ENCODE measurements at regions of chr11 and their contacts with region 1.

Region 1: DNA sequence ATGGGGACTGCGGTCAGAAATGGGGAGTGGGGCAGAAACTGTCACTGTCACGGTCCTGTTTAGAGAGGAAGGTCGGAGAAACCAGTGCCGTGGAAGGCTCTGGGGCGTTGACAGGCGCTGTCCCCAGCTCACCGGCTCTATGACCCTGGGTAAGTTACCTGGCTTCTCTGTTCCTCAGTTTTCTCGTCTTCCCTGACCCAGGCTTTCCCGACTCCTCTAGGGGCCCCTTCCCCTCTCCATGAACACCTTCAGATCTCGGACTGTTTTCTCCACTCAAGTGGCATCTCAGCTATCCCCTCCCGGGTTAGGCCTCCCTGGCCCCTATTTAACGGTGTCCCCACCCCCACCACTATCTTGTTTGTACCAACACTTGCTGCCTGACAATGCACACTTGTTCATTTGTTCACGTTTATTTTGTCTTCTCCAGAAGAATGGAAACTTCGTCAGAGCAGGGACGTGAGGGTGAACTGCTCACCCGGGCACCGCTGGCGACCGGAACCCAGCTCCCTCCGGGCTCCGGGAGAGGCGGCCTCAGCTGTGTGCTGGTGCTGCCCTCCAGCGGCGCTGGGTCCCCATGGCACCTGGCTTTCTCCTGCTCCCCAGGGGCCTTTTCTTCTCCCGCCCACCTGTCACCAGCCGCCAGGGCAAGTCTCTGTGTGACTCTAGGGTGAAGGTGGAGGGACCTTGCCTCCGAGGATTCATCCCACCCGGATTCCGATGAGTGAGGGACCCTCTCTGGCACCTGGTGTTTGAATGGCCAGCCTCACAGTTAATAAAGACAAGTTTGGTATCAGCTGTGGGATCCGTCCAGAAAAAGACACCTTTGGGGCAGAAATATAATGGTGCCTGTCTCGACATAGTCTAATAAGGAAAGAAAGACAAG is 33.1 kb upstream of the SLC35C1 start:
- DNase-seq: peak; percentile 91
- ATAC-seq: peak; percentile 96

Region 2: GRCh38 chr11:45339729-45340519 is 431.9 kb before region 1 on chr11:
- intact Hi-C with region 1: loop called (anchors 1 kb)
- DNase-seq: peak; percentile 98
- ATAC-seq: peak; percentile 97

Region 3: GRCh38 chr11:45405916-45406670 is 365.7 kb before region 1 on chr11:
- intact Hi-C with region 1: loop called (anchors 2 kb)
- DNase-seq: no peak
- ATAC-seq: no peak

Region 4: DNA sequence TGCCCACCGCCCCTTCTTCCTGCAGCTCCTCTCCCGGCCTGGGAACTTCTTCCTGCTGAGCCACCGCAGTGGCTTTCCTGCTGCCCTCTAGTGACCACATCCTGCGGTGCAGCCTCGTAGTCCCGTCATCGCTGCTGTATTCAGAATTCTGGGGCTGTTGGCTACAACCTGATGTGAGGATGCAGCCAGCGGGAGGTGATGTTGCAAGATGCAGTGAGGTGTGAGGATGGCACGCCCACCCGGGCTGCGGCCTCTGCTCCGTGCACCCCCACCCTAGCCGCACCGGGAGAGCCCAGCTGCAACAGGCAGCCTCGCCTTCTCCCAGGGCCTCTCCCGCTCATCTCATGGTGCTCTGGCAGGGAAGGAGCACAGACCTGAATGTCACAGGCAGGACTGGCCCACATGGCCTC is 116.5 kb before region 1 on chr11:
- intact Hi-C with region 1: loop called (anchors 2 kb)
- DNase-seq: peak; percentile 83
- ATAC-seq: peak; percentile 68

Region 5: GRCh38 chr11:45804761-45805304 is 33.0 kb after region 1 on chr11 and contains the start of gene SLC35C1:
- intact Hi-C with region 1: no loop called
- DNase-seq: peak; percentile 99
- ATAC-seq: peak; percentile 97
- total RNA-seq, gene SLC35C1: 6.0 TPM

Region 6: GRCh38 chr11:45846974-45847910 is 75.4 kb after region 1 on chr11 and contains the start of gene CRY2:
- intact Hi-C with region 1: loop called (anchors 10 kb)
- DNase-seq: peak; percentile 99
- ATAC-seq: peak; percentile 98
- total RNA-seq, gene CRY2: 69.8 TPM

Measured in Right ventricle myocardium inferior (tissue), 1 donor.